Activated T-helper 1 cell treated with anti-CD3 and anti-CD28 coated beads, Interleukin-12 subunit alpha, Interleukin-12 subunit beta, Interleukin-2, Interleukin-4 antibody, amounts not matched to agents 30 ng/mL and 10 ng/mL and 1 ng/mL, durations not matched to agents 14 hours and 24 hours and 36 hours (primary cell): ENCODE measurements at regions of chr20 and their contacts with region 1.

Region 1: GRCh38 chr20:49936153-49937027 is at the start of gene RNF114:
- DNase-seq: peak; percentile 82
- H3K4me3 Mint-ChIP-seq: peak within 1 kb of the TSS; percentile 94
- H3K27ac Mint-ChIP-seq: peak within 1 kb of the TSS; percentile 93
- H3K4me1 Mint-ChIP-seq: peaks cover 34% of the 10 kb centered on the region
- H3K27me3 Mint-ChIP-seq: no peaks in the 10 kb centered on the region
- total RNA-seq, gene RNF114: 58.7 and 60.3 TPM in 2 replicates

Region 2: GRCh38 chr20:50070991-50071888 is 134.8 kb after region 1 on chr20:
- intact Hi-C with region 1: loop called (anchors 1 kb)
- DNase-seq: peak; percentile 88
- H3K4me3 Mint-ChIP-seq: peak overlapping the region; percentile 56
- H3K27ac Mint-ChIP-seq: no peak overlapping the region
- H3K4me1 Mint-ChIP-seq: peaks cover 6% of the 10 kb centered on the region
- H3K27me3 Mint-ChIP-seq: peaks cover 12% of the 10 kb centered on the region

Region 3: DNA sequence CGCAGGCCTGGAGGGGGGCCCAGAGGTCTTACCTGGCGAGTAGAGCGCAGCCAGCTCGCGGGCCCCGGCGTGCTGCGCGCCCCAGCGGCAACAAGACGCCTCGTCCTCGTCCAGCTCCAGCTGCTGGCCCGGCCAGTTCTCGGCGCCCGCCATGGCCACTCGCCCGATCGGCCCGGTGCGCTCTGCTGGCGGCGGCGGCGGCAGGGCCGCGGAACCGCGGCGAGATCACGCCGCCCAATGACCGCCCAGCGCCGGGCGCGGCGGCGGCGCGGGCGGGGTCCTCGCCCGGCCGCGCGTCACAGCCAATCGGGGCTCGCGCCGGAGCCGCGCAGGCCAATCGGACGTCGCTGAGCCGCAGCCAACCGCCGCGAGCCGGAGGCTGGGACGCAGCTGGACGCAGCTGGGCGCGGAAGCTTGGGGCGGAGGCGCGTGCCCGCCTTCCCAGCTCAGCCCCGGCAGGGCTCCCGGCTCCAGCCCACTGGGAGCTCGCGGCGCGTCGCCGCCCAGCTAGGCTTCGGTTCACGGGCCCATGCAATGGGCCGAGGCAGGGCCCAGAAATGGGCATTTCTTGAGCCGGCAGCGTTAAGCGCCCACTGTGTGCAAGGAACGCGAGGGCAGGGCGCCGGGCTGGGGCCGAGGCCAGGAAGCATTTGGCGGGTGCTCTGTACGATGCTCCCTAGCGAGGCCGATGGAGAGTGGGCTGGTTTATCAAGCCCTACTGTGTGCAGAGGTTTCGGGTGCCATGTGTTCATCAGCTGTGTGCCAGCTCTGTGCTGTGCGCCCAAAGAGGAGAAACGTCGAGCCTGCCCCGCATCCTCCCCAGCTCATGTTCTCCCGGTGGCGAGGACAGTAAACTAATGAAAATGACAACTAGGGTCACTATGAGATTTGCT is 217.3 kb after region 1 on chr20 and contains the start of gene PEDS1:
- intact Hi-C with region 1: loop called (anchors 5 kb)
- DNase-seq: peak; percentile 86
- H3K4me3 Mint-ChIP-seq: peak within 1 kb of the TSS; percentile 87
- H3K27ac Mint-ChIP-seq: peak within 1 kb of the TSS; percentile 79
- H3K4me1 Mint-ChIP-seq: peaks cover 48% of the 10 kb centered on the region
- H3K27me3 Mint-ChIP-seq: peaks cover 4% of the 10 kb centered on the region
- total RNA-seq, gene PEDS1: 30.7 and 33.4 TPM in 2 replicates